ENCODE measurements at regions of chr20 and their contacts with region 1.

Region 1: DNA sequence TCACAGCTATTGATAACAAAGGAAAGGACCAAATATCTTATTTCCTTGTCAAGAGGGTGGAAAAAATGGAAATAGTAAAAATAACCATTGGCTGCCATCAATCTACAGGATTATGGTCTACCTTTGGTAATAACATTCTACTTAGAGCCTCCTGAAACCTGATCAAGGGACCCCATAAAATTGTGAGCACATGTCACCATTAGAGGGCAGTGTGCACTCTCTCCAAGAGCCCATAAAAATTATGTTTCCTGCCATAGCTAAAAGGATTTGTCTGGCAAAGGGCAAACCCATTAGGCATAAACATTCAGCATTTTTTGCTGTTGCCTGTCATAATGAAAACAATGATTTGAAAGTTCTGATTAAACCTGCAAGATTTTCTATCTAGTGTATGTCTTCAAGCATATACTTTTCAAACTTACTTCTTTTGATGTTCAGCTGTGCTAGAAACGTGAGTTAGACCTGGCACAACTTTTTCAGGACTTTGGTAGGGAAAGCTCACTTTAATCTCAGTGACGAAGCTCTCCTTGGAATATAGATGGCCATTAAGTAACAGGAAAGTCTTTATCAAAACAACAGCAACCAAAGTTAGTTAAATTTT is 120.7 kb upstream of the ZFP64 start:
- DNase-seq: peak in 2 of 3 donors; percentile 14 to 43
- ATAC-seq: peak; percentile 57 to 70
- H3K4me3 ChIP-seq: no peak overlapping the region
- H3K27ac ChIP-seq: no peak overlapping the region
- H3K4me1 ChIP-seq: no peaks in the 10 kb centered on the region
- H3K27me3 ChIP-seq: no peaks in the 10 kb centered on the region

Region 2: GRCh38 chr20:52104546-52105441 is 207.4 kb before region 1 on chr20:
- intact Hi-C with region 1: no loop called
- DNase-seq: peak; percentile 25 to 64 (median 62)
- ATAC-seq: peak; percentile 48 to 61
- H3K4me3 ChIP-seq: peak overlapping the region; percentile 45
- H3K27ac ChIP-seq: no peak overlapping the region
- H3K4me1 ChIP-seq: peaks cover 6% of the 10 kb centered on the region
- H3K27me3 ChIP-seq: no peaks in the 10 kb centered on the region

Region 3: DNA sequence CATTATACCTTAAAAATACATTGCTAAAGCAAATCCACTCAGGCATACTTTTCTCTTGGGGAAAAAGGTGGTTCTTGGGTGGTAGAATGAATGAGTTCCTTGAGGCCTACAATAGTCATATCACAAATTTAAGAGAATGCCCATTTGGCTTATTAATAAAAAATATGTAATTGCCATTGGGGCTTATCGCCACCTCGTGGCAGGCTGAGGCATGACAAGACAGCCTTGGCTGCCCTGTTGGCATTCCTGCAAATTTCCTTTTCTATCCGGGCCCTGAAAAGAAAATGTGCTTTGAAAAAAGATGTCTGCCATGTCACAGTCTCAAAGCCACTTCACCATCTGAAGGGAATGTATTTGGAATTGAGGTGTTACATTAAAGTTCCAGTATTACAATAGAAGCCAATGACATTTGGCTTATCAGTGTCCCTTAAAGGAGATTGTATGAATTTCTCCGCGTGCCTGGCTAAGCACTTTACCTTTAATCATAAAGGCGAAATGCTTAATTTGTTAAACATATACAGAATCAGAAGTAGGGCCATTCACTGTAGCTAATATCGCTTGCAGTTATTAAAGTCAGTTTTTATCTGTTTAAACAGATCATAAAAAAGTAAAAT is 67.6 kb after region 1 on chr20:
- intact Hi-C with region 1: loop called in 1 of 4 experiments (anchors 10 kb)
- DNase-seq: peak; percentile 20 to 75 (median 74)
- ATAC-seq: no peak
- H3K4me3 ChIP-seq: no peak overlapping the region
- H3K27ac ChIP-seq: no peak overlapping the region
- H3K4me1 ChIP-seq: no peaks in the 10 kb centered on the region
- H3K27me3 ChIP-seq: no peaks in the 10 kb centered on the region

Region 4: GRCh38 chr20:53569605-53570520 is 1257.6 kb after region 1 on chr20:
- intact Hi-C with region 1: loop called in 1 of 4 experiments (anchors 10 kb)
- DNase-seq: no peak
- ATAC-seq: no peak
- H3K4me3 ChIP-seq: no peak overlapping the region
- H3K27ac ChIP-seq: no peak overlapping the region
- H3K4me1 ChIP-seq: no peaks in the 10 kb centered on the region
- H3K27me3 ChIP-seq: no peaks in the 10 kb centered on the region